Gastrocnemius medialis (tissue), 4 donors: ENCODE measurements at regions of chr2 and their contacts with region 1.

Region 1: DNA sequence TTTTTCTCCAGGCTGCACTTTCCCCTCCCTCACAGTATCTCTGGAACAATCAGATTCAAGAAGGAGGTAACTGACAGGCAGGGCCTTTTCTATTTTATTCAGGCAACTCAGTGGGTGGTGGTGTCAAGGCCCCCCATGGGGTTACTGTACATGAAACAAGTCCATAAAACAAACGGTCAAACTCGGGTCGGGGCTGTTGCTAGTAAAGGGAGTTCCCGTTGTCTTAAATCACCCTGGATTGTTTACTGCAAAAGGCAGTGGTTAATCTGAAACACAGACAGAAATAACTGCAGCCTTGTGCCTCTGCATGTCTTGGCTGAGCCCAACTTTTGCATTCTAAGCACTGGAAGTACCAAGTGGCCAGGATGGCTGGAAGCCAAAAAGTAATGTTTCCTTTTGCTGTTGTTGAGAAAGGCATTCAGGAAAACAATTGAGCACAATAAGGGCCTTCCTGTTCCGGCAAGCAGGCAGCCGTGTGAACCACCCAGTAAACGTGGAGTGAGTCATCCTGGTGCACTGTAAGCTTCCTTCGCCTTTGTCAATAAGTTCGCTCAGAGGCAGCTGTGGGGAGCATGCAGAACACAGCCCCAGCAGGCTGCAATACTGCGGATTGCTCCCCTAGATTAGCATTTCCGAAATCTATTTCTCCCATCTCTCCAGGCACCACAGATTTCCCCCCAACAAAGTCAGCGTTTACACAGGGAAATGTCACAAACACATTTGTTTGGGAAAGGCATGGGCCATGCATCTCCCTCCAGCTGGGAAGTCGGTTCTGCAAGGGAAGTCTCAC is 149.6 kb downstream of the IRS1 start:
- DNase-seq: peak; percentile 70 to 89
- ATAC-seq: peak; percentile 96 to 97
- H3K4me3 ChIP-seq: peak overlapping the region in 2 of 4 donors; percentile 14 to 18
- H3K27ac ChIP-seq: peak overlapping the region; percentile 74 to 85 (median 79)
- H3K4me1 ChIP-seq: peaks cover 16 to 23% of the 10 kb centered on the region in 2 donors
- H3K27me3 ChIP-seq: no peaks in the 10 kb centered on the region
- CTCF ChIP-seq: no peak
- POLR2A ChIP-seq: no peak

Region 2: GRCh38 chr2:226151132-226151531 is 498.9 kb before region 1 on chr2:
- in situ Hi-C with region 1: no loop called
- intact Hi-C with region 1: loop called (anchors 10 kb)
- DNase-seq: peak in 1 of 2 donors; percentile 31
- ATAC-seq: peak; percentile 90 to 91
- H3K4me3 ChIP-seq: peak overlapping the region in 1 of 4 donors; percentile 2
- H3K27ac ChIP-seq: peak overlapping the region; percentile 8 to 56 (median 47)
- H3K4me1 ChIP-seq: peaks cover 18 to 28% of the 10 kb centered on the region in 2 donors
- H3K27me3 ChIP-seq: no peaks in the 10 kb centered on the region
- CTCF ChIP-seq: no peak
- POLR2A ChIP-seq: no peak